ENCODE measurements at regions of chr5 and their contacts with region 1.

Region 1: DNA sequence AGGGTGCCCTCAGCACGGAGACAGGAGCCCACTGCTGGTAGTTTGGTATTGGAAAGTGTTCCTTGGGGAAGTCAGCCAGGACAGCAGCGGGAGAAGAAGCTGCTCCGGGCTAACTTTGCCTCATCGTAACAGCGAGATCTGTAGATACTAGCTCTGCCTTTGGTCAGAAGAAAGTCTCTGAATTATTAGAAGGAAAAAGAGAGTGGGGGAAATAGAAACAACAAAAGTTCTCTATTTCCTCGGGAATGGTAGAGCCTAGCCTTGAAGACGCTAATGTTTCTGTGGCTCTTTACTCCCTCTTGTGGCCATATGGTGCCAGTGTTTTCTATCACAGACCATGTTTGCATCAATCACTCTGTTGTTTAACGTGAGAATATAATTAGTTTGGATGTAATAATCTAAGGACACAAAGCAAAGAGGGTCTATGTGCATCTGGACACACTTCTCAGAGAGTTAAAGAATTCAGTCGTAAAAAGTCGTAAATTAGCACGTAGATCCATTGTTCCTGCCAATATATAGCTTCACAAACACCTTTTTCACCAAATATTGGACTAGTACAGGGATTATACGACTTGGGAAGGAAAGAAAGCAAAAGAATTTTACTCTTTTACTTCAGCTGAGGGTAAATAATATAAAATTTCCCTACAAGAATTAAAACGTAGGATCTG is 40.2 kb upstream of the HSD17B4 start:
- DNase-seq: peak in 7 of 9 donors; percentile 54 to 73 (median 68)
- ATAC-seq: peak; percentile 92
- H3K4me3 ChIP-seq: peak overlapping the region; percentile 59
- H3K4me3 Mint-ChIP-seq: peak overlapping the region; percentile 88 to 93 (median 91)
- H3K27ac ChIP-seq: peak overlapping the region; percentile 15
- H3K27ac Mint-ChIP-seq: peak overlapping the region; percentile 55 to 86 (median 76)
- H3K4me1 ChIP-seq: peaks cover 0 to 5% of the 10 kb centered on the region in 2 donors
- H3K4me1 Mint-ChIP-seq: peaks cover 11 to 32% (median 20%) of the 10 kb centered on the region in 7 donors
- H3K27me3 ChIP-seq: no peaks in the 10 kb centered on the region
- H3K27me3 Mint-ChIP-seq: peaks cover 0 to 5% (median 0%) of the 10 kb centered on the region in 5 donors

Region 2: DNA sequence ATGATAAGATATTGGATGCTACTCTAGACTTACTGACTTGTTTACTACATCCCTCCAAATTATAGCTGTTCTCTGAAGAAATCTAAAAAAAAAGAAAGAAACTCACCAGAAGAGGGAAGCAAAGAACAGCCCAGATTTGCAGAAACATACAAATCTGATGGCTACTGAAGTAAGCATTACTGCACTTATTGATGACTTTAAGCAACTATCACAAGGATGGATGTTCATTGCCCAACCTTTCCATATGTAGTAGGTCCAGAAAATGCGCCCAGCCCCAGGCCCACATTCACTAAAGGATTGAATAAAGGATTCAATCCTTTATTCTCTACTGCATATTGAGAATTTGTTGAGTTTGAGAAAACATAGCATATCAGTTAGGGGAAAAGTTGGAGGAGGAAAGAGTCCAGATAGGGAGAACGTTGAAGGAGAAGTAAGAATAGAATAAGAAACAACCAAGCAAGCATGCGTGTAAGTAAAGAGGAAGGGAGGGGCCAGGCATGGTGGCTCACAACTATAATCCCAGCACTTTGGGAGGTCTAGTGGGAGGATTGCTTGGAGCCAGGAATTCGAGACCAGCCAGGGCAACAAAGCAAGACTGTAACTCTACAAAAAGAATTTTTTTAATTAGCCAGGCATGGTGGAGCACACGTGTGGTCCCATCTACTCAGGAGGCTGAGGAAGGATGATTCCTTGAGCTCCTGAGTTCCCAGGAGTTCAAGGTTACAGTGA is 389.9 kb before region 1 on chr5:
- CTCF ChIA-PET with region 1: interaction called, 21 read pairs
- POLR2A ChIA-PET with region 1: interaction called, 5 read pairs
- intact Hi-C with region 1: loop called (anchors 1 kb)
- DNase-seq: peak in 6 of 9 donors; percentile 12 to 60 (median 54)
- ATAC-seq: peak; percentile 67
- H3K4me3 ChIP-seq: no peak overlapping the region
- H3K4me3 Mint-ChIP-seq: no peak overlapping the region
- H3K27ac ChIP-seq: no peak overlapping the region
- H3K27ac Mint-ChIP-seq: peak overlapping the region in 3 of 9 donors; percentile 46 to 60 (median 47)
- H3K4me1 ChIP-seq: no peaks in the 10 kb centered on the region
- H3K4me1 Mint-ChIP-seq: peaks cover 0 to 6% (median 2%) of the 10 kb centered on the region in 7 donors
- H3K27me3 ChIP-seq: no peaks in the 10 kb centered on the region
- H3K27me3 Mint-ChIP-seq: no peaks in the 10 kb centered on the region

Region 3: GRCh38 chr5:119105971-119106370 is 306.1 kb before region 1 on chr5:
- CTCF ChIA-PET with region 1: no interaction called
- POLR2A ChIA-PET with region 1: no interaction called
- intact Hi-C with region 1: loop called in 1 of 2 experiments (anchors 5 kb)
- DNase-seq: no peak
- ATAC-seq: no peak
- H3K4me3 ChIP-seq: no peak overlapping the region
- H3K4me3 Mint-ChIP-seq: no peak overlapping the region
- H3K27ac ChIP-seq: no peak overlapping the region
- H3K27ac Mint-ChIP-seq: no peak overlapping the region
- H3K4me1 ChIP-seq: no peaks in the 10 kb centered on the region
- H3K4me1 Mint-ChIP-seq: peaks cover 0 to 13% (median 4%) of the 10 kb centered on the region in 7 donors
- H3K27me3 ChIP-seq: no peaks in the 10 kb centered on the region
- H3K27me3 Mint-ChIP-seq: no peaks in the 10 kb centered on the region

Region 4: DNA sequence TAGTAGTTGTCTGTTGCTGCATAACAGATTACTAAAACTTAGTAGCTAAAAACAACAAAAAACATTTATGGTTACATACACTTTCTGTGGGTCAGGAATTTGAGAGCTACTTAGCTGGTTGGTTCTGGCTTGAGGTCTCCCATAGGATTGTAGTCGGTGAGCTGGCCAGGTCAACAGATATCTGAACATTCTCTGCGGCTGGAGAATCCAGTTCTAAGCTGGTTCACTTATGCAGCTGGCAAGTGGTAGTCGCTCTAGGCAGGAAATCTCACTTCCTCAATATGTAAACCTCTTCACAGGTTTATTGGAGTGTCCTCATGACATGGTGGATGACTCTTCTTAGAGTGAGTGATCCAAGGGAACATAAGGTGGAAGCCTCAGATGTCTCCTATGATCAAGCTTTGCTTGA is 121.9 kb before region 1 on chr5:
- CTCF ChIA-PET with region 1: interaction called, 11 read pairs
- POLR2A ChIA-PET with region 1: no interaction called
- intact Hi-C with region 1: no loop called
- DNase-seq: peak in 1 of 9 donors; percentile 39
- ATAC-seq: peak; percentile 62
- H3K4me3 ChIP-seq: peak overlapping the region; percentile 47
- H3K4me3 Mint-ChIP-seq: peak overlapping the region; percentile 63 to 97 (median 82)
- H3K27ac ChIP-seq: peak overlapping the region; percentile 82
- H3K27ac Mint-ChIP-seq: peak overlapping the region; percentile 87 to 100 (median 96)
- H3K4me1 ChIP-seq: peaks cover 65% of the 10 kb centered on the region in 2 donors
- H3K4me1 Mint-ChIP-seq: peaks cover 67 to 95% (median 84%) of the 10 kb centered on the region in 7 donors
- H3K27me3 ChIP-seq: no peaks in the 10 kb centered on the region
- H3K27me3 Mint-ChIP-seq: no peaks in the 10 kb centered on the region

Region 5: DNA sequence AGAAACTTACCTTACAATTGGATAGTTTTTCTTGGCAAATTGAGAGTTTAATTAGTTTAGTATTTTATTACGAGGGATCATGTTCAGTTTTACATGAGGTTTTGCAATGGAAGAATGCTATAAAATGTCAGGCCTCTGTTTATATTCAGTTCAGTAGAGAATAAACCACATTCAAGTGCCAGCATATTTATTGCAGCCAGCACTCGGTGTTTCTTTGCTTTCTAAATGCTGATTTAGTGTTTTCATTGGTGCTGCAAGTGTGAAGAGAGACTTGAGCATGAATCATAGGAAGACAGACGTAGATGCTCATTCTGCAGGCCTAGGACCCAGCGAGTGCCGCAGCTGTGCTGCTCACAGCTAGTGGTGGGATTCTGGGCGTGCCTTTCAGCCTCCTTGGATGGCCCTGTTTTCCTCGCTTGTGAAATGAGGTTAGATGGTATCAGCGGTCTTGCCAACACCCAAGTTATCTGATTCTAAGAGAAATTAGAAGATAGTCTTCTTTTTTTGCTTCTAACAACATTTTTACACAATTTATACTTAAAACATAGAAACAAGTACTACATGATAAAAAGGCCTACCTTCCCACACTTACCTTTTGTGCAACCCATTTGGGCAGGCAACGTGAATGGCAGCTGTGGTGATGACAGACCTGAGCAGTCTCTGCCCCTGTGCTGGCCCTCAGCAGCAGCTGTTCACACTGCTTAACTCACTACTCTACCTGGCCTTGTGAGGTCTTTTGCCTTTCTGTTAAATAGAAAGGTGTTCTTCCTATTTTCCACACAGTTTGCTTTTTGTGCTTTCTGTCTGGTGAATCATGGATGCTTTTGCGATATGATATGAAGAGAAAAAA is 83.1 kb before region 1 on chr5:
- CTCF ChIA-PET with region 1: interaction called, 4 read pairs
- POLR2A ChIA-PET with region 1: interaction called, 5 read pairs
- intact Hi-C with region 1: loop called in 1 of 2 experiments (anchors 5 kb)
- DNase-seq: peak in 4 of 9 donors; percentile 30 to 71 (median 37)
- ATAC-seq: peak; percentile 59
- H3K4me3 ChIP-seq: peak overlapping the region; percentile 40
- H3K4me3 Mint-ChIP-seq: peak overlapping the region; percentile 73 to 97 (median 81)
- H3K27ac ChIP-seq: peak overlapping the region; percentile 78
- H3K27ac Mint-ChIP-seq: peak overlapping the region; percentile 84 to 99 (median 95)
- H3K4me1 ChIP-seq: peaks cover 72 to 86% of the 10 kb centered on the region in 2 donors
- H3K4me1 Mint-ChIP-seq: peaks cover 63 to 98% (median 90%) of the 10 kb centered on the region in 7 donors
- H3K27me3 ChIP-seq: no peaks in the 10 kb centered on the region
- H3K27me3 Mint-ChIP-seq: no peaks in the 10 kb centered on the region

Region 6: DNA sequence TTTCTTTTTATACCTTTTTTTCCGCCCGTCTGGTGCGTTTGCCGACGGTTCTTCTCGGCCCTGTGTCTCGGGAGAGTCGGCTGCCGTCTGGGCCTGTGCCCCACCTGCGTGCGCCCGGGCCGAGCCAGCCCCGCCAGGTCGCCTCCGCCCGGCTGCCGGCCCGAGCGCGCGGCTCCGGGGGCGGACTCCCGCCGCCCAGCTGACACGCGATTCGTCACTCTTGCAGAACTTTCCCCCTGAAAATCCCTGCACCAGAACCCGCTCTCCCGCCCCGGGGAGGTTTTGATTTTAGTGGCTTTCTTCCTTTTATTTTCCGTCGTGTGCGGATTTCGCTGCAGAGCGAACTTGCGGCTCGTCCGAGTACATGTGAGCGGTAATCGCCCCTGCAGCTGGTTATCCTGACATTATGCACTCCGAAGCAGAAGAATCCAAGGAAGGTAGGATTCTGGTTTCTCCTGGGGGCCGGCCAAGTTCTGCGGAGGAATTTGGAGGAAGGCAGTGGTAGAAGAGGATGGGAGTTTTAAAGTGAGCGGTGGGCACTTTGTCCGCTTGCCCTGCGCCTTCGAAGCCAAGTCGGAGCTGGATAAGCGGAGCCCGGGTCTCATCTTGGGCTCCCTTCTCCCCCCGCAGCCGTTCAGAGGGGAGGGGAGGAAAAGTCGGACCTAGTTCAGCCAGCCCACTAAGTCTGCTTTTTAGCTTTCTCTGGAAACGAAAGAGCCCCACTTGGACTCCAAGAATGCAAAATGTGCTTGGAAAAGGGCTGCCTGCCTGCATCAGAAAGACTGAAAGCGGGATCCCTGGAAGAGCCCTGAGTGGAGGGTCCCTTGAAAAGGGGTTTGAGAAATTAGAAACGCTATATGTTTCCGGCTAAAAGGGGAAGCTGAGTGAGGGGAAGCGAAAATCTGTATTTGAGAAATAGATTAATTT is 56.1 kb before region 1 on chr5 and contains the start of gene TNFAIP8:
- CTCF ChIA-PET with region 1: interaction called, 12 read pairs
- POLR2A ChIA-PET with region 1: interaction called, 3 read pairs
- intact Hi-C with region 1: no loop called
- DNase-seq: peak in 2 of 9 donors; percentile 69 to 85
- ATAC-seq: peak; percentile 61
- H3K4me3 ChIP-seq: peak within 1 kb of the TSS; percentile 53
- H3K4me3 Mint-ChIP-seq: peak within 1 kb of the TSS; percentile 81 to 98 (median 90)
- H3K27ac ChIP-seq: peak within 1 kb of the TSS; percentile 55
- H3K27ac Mint-ChIP-seq: peak within 1 kb of the TSS; percentile 86 to 97 (median 91)
- H3K4me1 ChIP-seq: peaks cover 78 to 88% of the 10 kb centered on the region in 2 donors
- H3K4me1 Mint-ChIP-seq: peaks cover 66 to 100% (median 97%) of the 10 kb centered on the region in 7 donors
- H3K27me3 ChIP-seq: no peaks in the 10 kb centered on the region
- H3K27me3 Mint-ChIP-seq: no peaks in the 10 kb centered on the region
- total RNA-seq, gene TNFAIP8: 102 to 162 (median 130) TPM

Region 7: DNA sequence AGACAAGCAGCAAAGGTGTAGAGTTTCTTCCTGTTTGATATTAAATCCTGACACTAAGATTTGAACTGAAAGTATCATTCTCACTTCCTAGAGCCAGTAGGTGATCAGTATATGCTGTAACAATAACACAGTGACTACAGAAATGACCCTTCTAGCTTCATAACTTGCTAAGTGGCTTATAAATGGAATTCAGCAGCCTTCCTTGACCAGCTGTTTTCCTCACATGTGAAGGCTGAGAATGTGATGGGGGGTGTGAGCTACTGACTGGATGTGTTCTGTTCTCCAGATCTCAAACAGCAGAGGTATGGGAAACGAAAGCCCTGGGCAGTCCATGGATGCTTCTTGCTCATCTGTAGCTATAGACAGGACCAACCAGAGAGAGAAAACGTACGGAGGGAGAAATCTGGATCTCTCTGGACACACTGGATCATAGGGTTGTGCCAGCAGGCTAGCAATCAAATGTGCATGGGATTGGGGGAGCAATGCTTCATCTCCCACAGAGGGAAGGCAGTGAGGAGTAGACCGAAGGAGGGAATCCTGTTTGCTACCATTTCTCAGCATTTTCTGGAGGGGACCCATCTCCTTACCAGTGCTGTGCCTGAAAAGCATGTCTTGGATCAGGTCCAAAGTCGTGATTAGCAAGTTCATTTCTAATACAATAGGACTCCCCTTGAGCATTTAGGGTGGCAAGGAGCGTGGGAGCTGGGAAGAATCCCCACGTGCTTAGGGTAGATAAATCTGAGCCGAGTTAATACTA is 16.8 kb before region 1 on chr5:
- CTCF ChIA-PET with region 1: no interaction called
- POLR2A ChIA-PET with region 1: no interaction called
- intact Hi-C with region 1: no loop called
- DNase-seq: no peak
- ATAC-seq: no peak
- H3K4me3 ChIP-seq: no peak overlapping the region
- H3K4me3 Mint-ChIP-seq: peak overlapping the region in 4 of 10 donors; percentile 0 to 46 (median 4)
- H3K27ac ChIP-seq: no peak overlapping the region
- H3K27ac Mint-ChIP-seq: peak overlapping the region; percentile 20 to 90 (median 79)
- H3K4me1 ChIP-seq: no peaks in the 10 kb centered on the region
- H3K4me1 Mint-ChIP-seq: peaks cover 39 to 74% (median 63%) of the 10 kb centered on the region in 7 donors
- H3K27me3 ChIP-seq: no peaks in the 10 kb centered on the region
- H3K27me3 Mint-ChIP-seq: no peaks in the 10 kb centered on the region

Region 8: GRCh38 chr5:119435436-119436132 is 23.5 kb after region 1 on chr5:
- CTCF ChIA-PET with region 1: interaction called, 11 read pairs
- POLR2A ChIA-PET with region 1: interaction called, 7 read pairs
- intact Hi-C with region 1: loop called (anchors 1 to 2 kb)
- DNase-seq: peak; percentile 49 to 75 (median 64)
- ATAC-seq: peak; percentile 89
- H3K4me3 ChIP-seq: no peak overlapping the region
- H3K4me3 Mint-ChIP-seq: peak overlapping the region in 2 of 10 donors; percentile 9 to 32
- H3K27ac ChIP-seq: no peak overlapping the region
- H3K27ac Mint-ChIP-seq: no peak overlapping the region
- H3K4me1 ChIP-seq: no peaks in the 10 kb centered on the region
- H3K4me1 Mint-ChIP-seq: peaks cover 0 to 25% (median 16%) of the 10 kb centered on the region in 7 donors
- H3K27me3 ChIP-seq: no peaks in the 10 kb centered on the region
- H3K27me3 Mint-ChIP-seq: peaks cover 7 to 30% (median 8%) of the 10 kb centered on the region in 5 donors